Heart right ventricle (tissue), 16 donors: ENCODE measurements at regions of chr17 and their contacts with region 1.

Region 1: DNA sequence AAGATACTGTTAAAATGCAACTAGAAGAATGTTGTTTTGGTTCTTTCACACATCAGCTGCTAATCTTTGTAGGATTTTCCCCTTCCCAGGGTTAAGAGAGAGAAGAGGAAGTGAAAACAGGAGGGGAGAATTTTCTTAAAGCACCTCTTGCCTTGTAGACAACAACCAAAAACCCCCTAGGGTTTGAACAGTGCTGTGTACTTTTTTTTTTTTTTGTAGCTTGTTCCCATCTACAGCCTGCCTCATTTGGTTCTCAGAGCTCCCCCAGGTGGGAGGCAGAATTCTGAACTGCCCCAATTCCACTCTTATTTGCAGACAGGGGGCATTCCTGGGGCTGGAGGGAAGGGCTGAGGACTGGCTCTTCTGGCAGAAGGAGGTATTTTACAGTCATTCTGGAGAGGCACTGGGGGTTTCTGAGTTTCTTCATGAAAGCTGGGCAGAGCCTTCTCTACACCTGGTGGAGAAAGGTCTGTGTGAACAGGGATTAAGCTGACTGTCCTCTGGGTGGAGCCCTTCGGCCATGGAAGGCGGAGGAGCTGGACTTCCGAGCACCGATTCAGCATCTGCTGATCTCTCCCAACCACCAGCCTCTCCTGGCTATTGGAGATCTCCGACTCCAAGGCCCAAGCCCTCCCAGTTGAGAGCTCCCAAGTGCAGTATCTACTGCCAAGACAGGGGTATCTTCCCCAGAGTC is 32.2 kb downstream of the SMARCE1 start:
- DNase-seq: peak in 1 of 2 donors; percentile 40
- ATAC-seq: peak in 4 of 8 donors; percentile 31 to 60 (median 50)
- H3K4me3 ChIP-seq: no peak overlapping the region
- H3K27ac ChIP-seq: no peak overlapping the region
- H3K4me1 ChIP-seq: peaks cover 0 to 19% (median 6%) of the 10 kb centered on the region in 9 donors
- H3K27me3 ChIP-seq: peaks cover 4 to 48% (median 15%) of the 10 kb centered on the region in 7 donors
- CTCF ChIP-seq: peak in 7 of 9 donors; percentile 22 to 53 (median 39)

Region 2: GRCh38 chr17:40726919-40727318 is 111.5 kb after region 1 on chr17:
- intact Hi-C with region 1: loop called in 2 of 10 experiments (anchors 5 kb)
- DNase-seq: no peak
- ATAC-seq: no peak
- H3K4me3 ChIP-seq: no peak overlapping the region
- H3K27ac ChIP-seq: no peak overlapping the region
- H3K4me1 ChIP-seq: no peaks in the 10 kb centered on the region
- H3K27me3 ChIP-seq: peaks cover 0 to 49% (median 12%) of the 10 kb centered on the region in 7 donors
- CTCF ChIP-seq: peak in 5 of 9 donors; percentile 12 to 39 (median 25)

Region 3: GRCh38 chr17:40791787-40792436 is 176.5 kb after region 1 on chr17:
- intact Hi-C with region 1: loop called in 8 of 10 experiments (anchors 1 to 10 kb)
- DNase-seq: no peak
- ATAC-seq: peak in 1 of 8 donors; percentile 35
- H3K4me3 ChIP-seq: no peak overlapping the region
- H3K27ac ChIP-seq: no peak overlapping the region
- H3K4me1 ChIP-seq: peaks cover 0 to 6% (median 0%) of the 10 kb centered on the region in 9 donors
- H3K27me3 ChIP-seq: peaks cover 0 to 39% (median 12%) of the 10 kb centered on the region in 7 donors
- CTCF ChIP-seq: peak in 8 of 9 donors; percentile 25 to 68 (median 58)

Region 4: DNA sequence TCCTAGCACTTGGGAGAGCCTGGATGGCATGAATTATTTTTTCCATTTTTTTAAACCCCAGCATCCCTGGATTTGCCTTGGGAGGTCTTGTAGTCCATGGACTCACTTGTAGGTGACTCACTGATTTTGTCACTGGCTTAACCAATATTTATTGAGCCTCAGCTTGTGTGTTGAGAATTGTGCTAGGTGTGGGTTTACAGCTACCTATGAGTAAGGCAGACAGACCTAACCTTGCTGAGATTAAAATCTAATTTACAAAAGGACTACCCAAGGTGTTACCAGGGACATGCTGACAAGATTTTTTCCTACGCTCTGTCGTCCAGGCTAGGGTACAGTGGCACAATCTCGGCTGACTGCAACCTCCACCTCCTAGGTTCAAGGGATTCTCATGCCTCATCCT is 191.5 kb after region 1 on chr17:
- intact Hi-C with region 1: no loop called
- DNase-seq: no peak
- ATAC-seq: no peak
- H3K4me3 ChIP-seq: no peak overlapping the region
- H3K27ac ChIP-seq: no peak overlapping the region
- H3K4me1 ChIP-seq: peaks cover 3 to 35% (median 22%) of the 10 kb centered on the region in 9 donors
- H3K27me3 ChIP-seq: peaks cover 0 to 86% (median 0%) of the 10 kb centered on the region in 7 donors
- CTCF ChIP-seq: no peak